Transverse colon (tissue), 4 donors: ENCODE measurements at regions of chr16 and their contacts with region 1.

Region 1: GRCh38 chr16:88405216-88406060 is 22.7 kb downstream of the ZNF469 start:
- DNase-seq: no peak
- H3K4me3 ChIP-seq: no peak overlapping the region
- H3K27ac ChIP-seq: no peak overlapping the region
- H3K4me1 ChIP-seq: no peaks in the 10 kb centered on the region
- H3K27me3 ChIP-seq: peaks cover 18% of the 10 kb centered on the region
- CTCF ChIP-seq: no peak
- EP300 ChIP-seq: no peak
- POLR2A ChIP-seq: no peak

Region 2: GRCh38 chr16:88287219-88287618 is 118.2 kb before region 1 on chr16:
- in situ Hi-C with region 1: loop called in 1 of 4 experiments (anchors 25 kb)
- intact Hi-C with region 1: no loop called
- DNase-seq: no peak
- H3K4me3 ChIP-seq: no peak overlapping the region
- H3K27ac ChIP-seq: no peak overlapping the region
- H3K4me1 ChIP-seq: peaks cover 0 to 8% (median 4%) of the 10 kb centered on the region in 4 donors
- H3K27me3 ChIP-seq: no peaks in the 10 kb centered on the region
- CTCF ChIP-seq: peak in 3 of 5 experiments; percentile 13 to 79 (median 59)
- EP300 ChIP-seq: no peak
- POLR2A ChIP-seq: no peak

Region 3: DNA sequence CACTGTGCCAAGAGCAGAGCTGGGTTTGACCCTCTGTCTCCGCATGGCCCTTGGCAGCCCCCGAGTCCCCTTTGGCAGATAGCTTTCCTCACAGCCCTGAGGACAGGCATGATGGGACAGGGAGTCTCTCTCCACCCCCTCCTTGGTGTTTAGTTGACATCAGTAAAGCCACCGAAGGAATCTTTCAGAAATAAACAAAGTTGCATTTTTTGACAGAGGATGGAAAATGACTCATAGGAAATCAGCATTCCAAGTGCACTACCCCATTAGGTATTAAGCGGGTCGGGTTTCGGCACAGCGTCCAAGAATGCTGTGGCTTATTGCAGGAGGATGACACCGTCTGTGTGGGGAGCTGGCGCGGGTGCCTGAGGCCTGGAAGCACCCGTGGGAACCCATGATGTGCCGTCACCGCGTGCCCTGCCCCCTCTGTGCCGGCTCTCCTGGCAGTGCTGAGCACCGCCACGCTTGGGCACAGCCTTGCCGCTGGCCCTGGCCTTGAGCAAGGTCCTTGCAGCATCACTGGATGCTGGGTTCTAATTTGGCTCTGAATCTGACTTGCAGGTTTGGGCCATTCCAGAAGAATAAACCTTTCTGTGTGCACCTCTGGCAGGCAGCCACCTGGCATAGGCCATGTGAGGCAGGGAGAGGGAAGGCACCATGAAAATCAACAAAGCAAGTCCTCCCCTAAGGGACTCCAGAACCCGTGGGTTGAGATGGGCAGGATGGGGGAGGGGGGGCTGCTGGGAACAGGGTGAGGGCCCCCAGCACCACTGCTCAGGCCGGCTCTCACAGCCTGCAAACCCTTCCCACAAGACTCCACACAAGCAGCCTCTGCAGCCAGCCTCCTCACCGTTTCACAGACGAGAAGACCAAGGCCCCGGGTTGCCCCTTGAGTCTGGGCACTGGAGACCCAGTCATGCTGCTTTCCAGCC is 73.2 kb before region 1 on chr16:
- in situ Hi-C with region 1: no loop called
- intact Hi-C with region 1: no loop called
- DNase-seq: peak; percentile 35
- H3K4me3 ChIP-seq: no peak overlapping the region
- H3K27ac ChIP-seq: peak overlapping the region in 1 of 4 donors; percentile 12
- H3K4me1 ChIP-seq: peaks cover 0 to 6% (median 3%) of the 10 kb centered on the region in 4 donors
- H3K27me3 ChIP-seq: no peaks in the 10 kb centered on the region
- CTCF ChIP-seq: no peak
- EP300 ChIP-seq: no peak
- POLR2A ChIP-seq: no peak